OCI-LY7 (cell line): ENCODE measurements at regions of chr6 and their contacts with region 1.

Region 1: DNA sequence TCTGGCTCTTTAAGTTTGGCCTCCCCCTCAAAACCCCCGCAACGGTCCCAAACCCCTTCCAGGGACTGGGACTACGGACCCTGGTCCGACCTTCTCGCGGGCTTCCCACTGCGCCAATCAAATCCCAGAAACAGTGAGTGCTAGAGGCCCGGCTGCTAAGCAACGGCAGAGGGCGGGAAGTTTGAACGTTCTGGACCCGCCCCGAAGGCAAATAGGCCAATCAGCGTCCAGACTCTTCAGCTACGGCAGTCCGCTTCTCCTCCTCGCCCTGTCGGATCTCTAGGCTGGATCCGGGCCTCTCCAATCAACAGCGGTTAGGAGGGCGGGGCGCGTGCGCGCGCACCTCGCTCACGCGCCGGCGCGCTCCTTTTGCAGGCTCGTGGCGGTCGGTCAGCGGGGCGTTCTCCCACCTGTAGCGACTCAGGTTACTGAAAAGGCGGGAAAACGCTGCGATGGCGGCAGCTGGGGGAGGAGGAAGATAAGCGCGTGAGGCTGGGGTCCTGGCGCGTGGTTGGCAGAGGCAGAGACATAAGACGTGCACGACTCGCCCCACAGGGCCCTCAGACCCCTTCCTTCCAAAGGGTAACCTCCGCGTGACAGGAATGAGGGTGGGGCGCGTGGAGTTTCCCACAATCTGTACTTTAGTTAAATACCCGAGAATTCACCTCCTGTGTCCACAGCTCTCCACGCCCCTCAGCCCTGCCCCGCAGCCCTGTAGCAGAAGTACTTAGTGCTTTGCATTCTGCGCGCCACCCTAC is at the start of gene MSH5:
- DNase-seq: peak; percentile 100
- H3K4me3 ChIP-seq: peak within 1 kb of the TSS; percentile 79
- H3K27ac ChIP-seq: peak within 1 kb of the TSS; percentile 93
- H3K4me1 ChIP-seq: peaks cover 50% of the 10 kb centered on the region
- CTCF ChIP-seq: no peak
- total RNA-seq, gene MSH5: 104 and 108 TPM in 2 replicates

Region 2: DNA sequence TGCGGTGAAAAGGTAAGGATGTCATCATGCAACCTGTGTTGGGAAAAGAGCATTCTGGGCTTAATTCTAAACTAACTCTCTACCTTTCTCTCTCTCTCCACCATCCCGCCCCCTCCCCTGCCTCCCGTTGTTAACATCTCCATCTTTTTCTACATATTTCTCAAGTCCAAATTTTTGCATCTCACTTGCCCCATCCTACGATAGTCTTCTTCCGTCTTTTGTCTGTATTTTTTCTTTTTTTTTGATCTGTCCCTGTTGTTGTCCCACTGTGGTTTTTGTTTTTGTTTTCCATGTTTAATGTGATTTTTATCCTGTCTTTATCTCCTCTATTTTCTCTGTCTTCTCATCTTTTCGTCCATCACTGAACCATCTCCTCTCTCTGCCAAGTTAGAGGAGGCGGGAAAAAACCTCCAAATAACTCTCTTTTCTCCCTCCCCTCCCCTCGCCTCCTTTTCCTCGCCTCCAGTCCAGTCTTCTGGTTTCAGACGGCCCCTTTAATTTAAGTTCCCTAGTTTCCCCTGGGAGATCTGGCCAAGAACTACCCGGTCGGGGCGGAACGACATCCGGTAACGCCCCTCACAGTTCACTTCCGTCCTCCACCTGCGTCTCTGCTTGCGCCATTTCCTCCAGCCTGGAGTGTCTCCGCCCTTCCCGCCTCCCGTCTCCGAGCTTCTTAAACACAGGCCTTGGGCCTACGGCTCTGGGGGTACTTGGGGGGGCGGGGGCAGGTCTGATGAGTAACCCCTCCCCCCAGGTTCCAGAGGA is 192.7 kb before region 1 on chr6 and contains the start of gene NFKBIL1:
- CTCF ChIA-PET with region 1: no interaction called
- POLR2A ChIA-PET with region 1: interaction called, 3 read pairs
- intact Hi-C with region 1: loop called (anchors 2 kb)
- DNase-seq: peak; percentile 99
- H3K4me3 ChIP-seq: peak within 1 kb of the TSS; percentile 67
- H3K27ac ChIP-seq: peak within 1 kb of the TSS; percentile 64
- H3K4me1 ChIP-seq: peaks cover 62% of the 10 kb centered on the region
- CTCF ChIP-seq: peak; percentile 28; the same call in 1 of the 2 replicates
- total RNA-seq, gene NFKBIL1: 17.1 and 21.8 TPM in 2 replicates

Region 3: GRCh38 chr6:31665501-31666336 is 74.1 kb before region 1 on chr6 and contains the start of gene CSNK2B:
- CTCF ChIA-PET with region 1: no interaction called
- POLR2A ChIA-PET with region 1: interaction called, 6 read pairs
- intact Hi-C with region 1: loop called (anchors 1 kb)
- DNase-seq: peak; percentile 98
- H3K4me3 ChIP-seq: peak within 1 kb of the TSS; percentile 99
- H3K27ac ChIP-seq: peak within 1 kb of the TSS; percentile 90
- H3K4me1 ChIP-seq: peaks cover 43% of the 10 kb centered on the region
- CTCF ChIP-seq: no peak
- total RNA-seq, gene CSNK2B: 207 and 230 TPM in 2 replicates

Region 4: DNA sequence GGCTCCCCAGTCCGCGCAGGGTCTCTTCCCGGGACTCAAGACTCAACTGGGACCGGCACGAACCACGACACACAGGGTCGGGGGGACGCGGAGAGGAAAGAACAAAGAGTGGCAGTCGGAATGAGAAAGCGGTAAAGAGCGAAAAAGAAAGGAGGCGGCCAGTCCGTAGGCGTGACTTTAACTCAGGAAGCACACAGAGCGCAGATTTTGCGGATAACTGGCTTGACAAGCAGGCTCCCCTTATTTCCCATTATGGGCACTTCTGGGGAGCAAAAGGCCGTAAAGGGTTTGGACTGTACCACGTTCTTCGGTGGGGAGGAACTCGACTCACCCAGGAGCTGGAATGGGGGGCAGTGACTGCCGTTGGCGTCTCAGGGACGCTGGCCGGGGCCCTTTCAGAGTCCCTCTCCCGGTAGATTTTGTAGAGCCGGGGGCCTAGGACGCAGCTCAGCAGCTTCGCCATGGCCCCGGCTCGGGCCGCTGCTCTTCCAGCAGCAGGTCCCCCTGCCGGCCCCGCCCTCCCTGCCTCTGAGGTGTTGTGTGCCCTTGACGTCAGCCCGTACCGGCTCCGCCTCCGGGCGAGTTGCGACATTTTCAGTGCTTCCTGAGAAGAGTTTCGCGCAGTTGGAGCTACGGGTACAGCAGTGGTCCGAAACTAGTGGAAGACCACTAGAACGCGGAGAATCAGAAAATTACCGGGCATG is 36.8 kb before region 1 on chr6 and contains the start of gene ABHD16A:
- CTCF ChIA-PET with region 1: interaction called, 3 read pairs
- POLR2A ChIA-PET with region 1: interaction called, 7 read pairs
- intact Hi-C with region 1: loop called (anchors 2 kb)
- DNase-seq: peak; percentile 99
- H3K4me3 ChIP-seq: peak within 1 kb of the TSS; percentile 78
- H3K27ac ChIP-seq: peak within 1 kb of the TSS; percentile 74
- H3K4me1 ChIP-seq: peaks cover 20% of the 10 kb centered on the region
- CTCF ChIP-seq: no peak
- total RNA-seq, gene ABHD16A: 28.6 and 34.8 TPM in 2 replicates

Region 5: DNA sequence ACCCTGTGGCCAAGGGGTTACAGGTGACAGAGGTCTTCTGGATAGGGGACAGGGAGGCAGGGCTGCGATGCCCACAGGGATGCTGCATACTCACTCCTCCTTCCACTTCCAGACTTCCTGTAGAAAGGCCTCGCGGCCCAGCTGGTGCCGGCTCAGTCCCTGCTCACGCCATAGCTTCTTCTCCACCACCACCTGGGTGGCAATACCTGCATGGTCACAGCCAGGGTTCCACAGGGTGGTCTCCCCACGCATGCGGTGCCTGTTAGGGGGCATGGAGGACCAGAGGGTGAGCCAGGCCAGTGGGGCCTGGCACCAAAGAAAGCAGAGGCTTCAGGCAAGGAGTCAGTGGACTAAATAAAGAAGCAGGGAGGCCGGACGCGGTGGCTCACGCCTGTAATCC is 45.7 kb after region 1 on chr6:
- CTCF ChIA-PET with region 1: no interaction called
- POLR2A ChIA-PET with region 1: interaction called, 3 read pairs
- intact Hi-C with region 1: loop called (anchors 5 kb)
- DNase-seq: no peak
- H3K4me3 ChIP-seq: no peak overlapping the region
- H3K27ac ChIP-seq: no peak overlapping the region
- H3K4me1 ChIP-seq: peaks cover 25% of the 10 kb centered on the region
- CTCF ChIP-seq: no peak

Region 6: GRCh38 chr6:31806465-31807272 is 66.9 kb after region 1 on chr6 and contains the start of gene LSM2:
- CTCF ChIA-PET with region 1: no interaction called
- POLR2A ChIA-PET with region 1: interaction called, 11 read pairs
- intact Hi-C with region 1: no loop called
- DNase-seq: peak; percentile 95
- H3K4me3 ChIP-seq: peak within 1 kb of the TSS; percentile 85
- H3K27ac ChIP-seq: peak within 1 kb of the TSS; percentile 63
- H3K4me1 ChIP-seq: peaks cover 13% of the 10 kb centered on the region
- CTCF ChIP-seq: peak; percentile 70
- total RNA-seq, gene LSM2: 65.2 and 78.4 TPM in 2 replicates

Region 7: DNA sequence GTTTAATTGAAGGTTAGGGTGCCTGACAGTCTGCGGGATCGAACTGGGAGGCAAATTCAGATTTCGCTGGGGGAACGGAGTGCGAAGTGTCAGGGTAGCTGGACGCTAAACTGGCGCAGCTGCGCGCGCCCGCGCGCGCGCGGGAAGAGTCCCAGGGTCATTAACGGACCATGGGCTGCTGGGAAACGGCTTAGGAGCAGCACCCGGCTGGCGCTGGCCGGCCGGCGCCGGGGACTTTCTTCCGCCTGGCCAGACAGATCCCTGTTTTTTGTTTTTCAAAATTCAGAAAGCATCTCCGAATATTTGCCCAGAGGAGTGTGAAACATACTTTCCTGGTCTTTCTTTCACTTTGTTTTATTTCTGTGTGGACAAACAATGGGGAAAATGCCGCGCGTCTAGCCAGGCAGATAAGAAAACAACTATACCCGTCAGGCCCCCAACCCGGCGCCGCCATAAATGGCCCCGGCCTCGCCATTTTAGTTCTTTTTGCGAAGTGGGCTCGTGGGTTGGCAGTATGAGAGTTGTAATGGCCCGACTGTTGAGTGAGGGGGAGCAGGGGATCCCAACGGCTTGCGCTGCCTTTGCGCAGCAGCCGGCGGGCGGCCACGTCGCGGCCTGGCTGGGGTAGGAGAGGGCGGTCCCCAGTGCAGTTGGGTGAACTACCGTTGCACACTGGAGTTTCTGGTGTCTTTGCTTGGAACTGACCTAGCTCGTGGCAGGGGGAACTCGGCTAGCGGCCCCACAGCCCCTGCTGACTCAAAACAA is 94.8 kb after region 1 on chr6:
- CTCF ChIA-PET with region 1: interaction called, 3 read pairs
- POLR2A ChIA-PET with region 1: interaction called, 43 read pairs
- intact Hi-C with region 1: loop called (anchors 2 kb)
- DNase-seq: peak; percentile 91
- H3K4me3 ChIP-seq: peak overlapping the region; percentile 99
- H3K27ac ChIP-seq: peak overlapping the region; percentile 95
- H3K4me1 ChIP-seq: peaks cover 59% of the 10 kb centered on the region
- CTCF ChIP-seq: no peak

Region 8: GRCh38 chr6:31915748-31916145 is 175.9 kb after region 1 on chr6:
- CTCF ChIA-PET with region 1: no interaction called
- POLR2A ChIA-PET with region 1: no interaction called
- intact Hi-C with region 1: no loop called
- DNase-seq: no peak
- H3K4me3 ChIP-seq: no peak overlapping the region
- H3K27ac ChIP-seq: no peak overlapping the region
- H3K4me1 ChIP-seq: no peaks in the 10 kb centered on the region
- CTCF ChIP-seq: no peak